Dorsolateral prefrontal cortex (tissue), 120 donors: ENCODE measurements at regions of chr6 and their contacts with region 1.

Region 1: GRCh38 chr6:42726485-42727086 is 4.2 kb upstream of the PRPH2 start:
- DNase-seq: peak in 9 of 10 donors; percentile 56 to 83 (median 70)
- H3K4me3 ChIP-seq: peak overlapping the region; percentile 39 to 76 (median 62)
- H3K27ac ChIP-seq: peak overlapping the region in 55 of 59 donors; percentile 6 to 91 (median 70)
- H3K27me3 ChIP-seq: no peaks in the 10 kb centered on the region
- CTCF ChIP-seq: peak; percentile 77 to 98 (median 92)

Region 2: DNA sequence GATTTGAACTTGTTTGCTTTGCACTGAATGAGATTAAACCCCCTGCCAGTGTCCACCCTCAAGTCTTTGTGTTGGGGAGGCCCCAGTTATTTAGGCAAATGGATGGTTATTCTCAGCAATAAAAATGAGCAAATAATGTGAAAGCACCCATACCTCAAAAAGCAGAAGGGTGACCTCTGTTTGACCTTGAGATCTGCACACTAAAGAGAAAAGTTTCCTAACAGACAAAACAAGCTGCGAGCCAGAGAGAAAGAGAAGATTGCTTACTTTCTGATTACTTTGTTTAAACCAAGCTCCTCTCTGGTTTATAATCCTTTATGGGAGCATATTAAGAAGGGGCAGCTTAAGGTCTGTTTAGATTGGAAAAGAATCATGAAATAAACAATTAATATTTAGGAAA is 244.4 kb before region 1 on chr6:
- intact Hi-C with region 1: no loop called
- DNase-seq: no peak
- H3K4me3 ChIP-seq: no peak overlapping the region
- H3K27ac ChIP-seq: no peak overlapping the region
- H3K27me3 ChIP-seq: no peaks in the 10 kb centered on the region
- CTCF ChIP-seq: no peak

Region 3: DNA sequence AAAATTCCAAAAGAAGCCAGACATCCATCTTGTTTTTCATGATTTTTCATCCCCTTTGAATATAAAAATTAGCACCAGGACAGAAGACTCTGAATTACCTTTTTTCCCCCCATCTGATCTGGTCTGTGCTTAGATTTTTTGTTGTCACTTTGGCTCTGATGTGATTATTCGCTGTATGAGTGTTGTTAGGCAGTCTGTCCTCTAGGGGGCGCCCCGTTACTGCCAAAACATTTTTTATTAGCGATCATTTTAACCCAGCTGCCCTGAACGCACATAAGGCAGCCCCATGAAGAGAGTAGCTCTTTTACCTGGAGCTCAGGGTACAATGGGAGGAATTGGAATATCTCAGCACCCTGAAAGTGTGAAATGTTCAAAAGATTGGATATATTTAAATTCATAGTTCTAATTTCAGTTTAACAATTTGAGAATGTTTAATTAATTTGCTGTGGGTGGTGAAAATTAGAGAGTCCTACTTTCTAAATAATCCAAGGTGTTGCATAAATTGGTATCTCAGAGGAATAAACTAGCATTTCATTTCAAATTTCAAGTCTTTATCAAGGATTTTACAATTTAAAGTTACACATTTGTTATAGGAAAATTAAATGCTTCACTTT is 64.9 kb before region 1 on chr6:
- intact Hi-C with region 1: loop called (anchors 2 kb)
- DNase-seq: peak; percentile 61 to 90 (median 74)
- H3K4me3 ChIP-seq: no peak overlapping the region
- H3K27ac ChIP-seq: peak overlapping the region in 4 of 59 donors; percentile 3 to 54 (median 20)
- H3K27me3 ChIP-seq: no peaks in the 10 kb centered on the region
- CTCF ChIP-seq: peak; percentile 67 to 98 (median 91)

Region 4: DNA sequence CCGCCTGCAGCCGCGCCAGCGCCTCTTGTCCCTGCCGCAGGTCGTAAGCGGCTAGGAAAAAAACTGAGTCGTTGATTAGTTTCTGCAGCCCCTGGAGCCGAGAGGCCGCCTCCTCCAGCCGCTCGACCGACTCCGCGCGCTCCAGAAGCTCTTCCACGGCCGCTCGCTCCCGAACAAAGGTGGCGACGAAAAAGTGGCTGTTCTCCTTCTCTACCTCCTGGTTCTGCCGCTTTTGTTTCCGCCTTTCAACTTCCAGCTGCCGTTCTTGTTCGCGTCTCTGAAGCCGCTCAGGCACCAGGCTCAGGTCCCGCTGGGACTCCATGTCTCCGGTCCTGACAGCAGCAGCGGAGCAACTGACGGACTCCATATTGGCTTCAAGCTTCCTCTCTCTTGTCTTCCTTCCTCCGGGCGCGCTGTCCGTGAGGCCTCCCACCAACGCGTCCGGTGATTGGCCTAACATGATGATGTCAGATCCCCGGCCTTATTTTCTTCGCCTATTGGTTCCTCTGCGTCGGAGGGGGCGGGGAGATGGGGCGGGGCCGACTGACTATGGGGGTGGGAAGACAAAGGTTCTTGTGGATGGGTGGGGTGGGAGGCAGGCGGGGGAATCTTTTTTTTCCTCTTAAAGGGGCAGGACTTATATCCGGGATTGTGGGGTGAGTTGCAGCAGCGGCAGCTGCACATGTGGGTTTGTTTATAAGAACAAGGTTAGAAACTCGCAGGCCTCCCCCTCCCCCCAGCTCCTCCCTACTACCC is 19.3 kb after region 1 on chr6 and contains the start of gene TBCC:
- intact Hi-C with region 1: loop called in 1 of 2 experiments (anchors 2 kb)
- DNase-seq: peak; percentile 88 to 99 (median 98)
- H3K4me3 ChIP-seq: peak within 1 kb of the TSS; percentile 62 to 100 (median 96)
- H3K27ac ChIP-seq: peak within 1 kb of the TSS; percentile 86 to 99 (median 96)
- H3K27me3 ChIP-seq: no peaks in the 10 kb centered on the region
- CTCF ChIP-seq: peak in 5 of 56 donors; percentile 7 to 23 (median 14)
- total RNA-seq, gene TBCC: 12.9 to 35.3 (median 26.6) TPM

Region 5: DNA sequence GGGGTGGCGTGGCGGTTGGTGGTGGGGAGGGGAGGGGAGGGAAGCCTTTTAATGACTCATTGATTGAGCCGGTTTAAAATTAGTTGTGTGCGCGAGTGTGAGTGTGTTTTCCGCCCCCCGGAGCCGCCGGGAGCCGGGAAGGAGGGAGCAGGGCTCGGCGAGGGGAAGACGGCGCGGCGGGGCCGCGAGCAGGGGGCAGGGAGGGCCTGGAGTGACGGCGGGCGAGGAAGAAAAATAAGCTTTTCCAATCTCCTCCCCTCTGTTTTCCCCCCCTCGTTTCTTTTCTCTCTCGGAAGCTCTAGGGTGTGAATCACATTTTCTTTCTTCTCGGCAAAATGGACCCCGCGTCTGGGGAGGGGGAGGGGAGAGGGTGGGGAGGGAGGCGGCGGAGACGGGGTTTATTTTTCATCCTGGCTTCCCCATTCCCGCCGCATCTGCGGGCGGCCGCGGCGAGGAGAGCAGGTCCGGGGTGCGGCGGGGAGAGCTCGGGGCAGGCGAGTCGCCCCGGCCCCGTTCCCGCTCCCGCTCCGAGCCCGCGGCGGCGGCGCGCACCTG is 56.1 kb after region 1 on chr6:
- intact Hi-C with region 1: loop called in 1 of 2 experiments (anchors 10 kb)
- DNase-seq: peak; percentile 51 to 86 (median 75)
- H3K4me3 ChIP-seq: peak overlapping the region; percentile 61 to 98 (median 87)
- H3K27ac ChIP-seq: peak overlapping the region; percentile 99 to 100 (median 100)
- H3K27me3 ChIP-seq: no peaks in the 10 kb centered on the region
- CTCF ChIP-seq: no peak